Activated T-helper 1 cell treated with anti-CD3 and anti-CD28 coated beads, Interleukin-12 subunit alpha, Interleukin-12 subunit beta, Interleukin-2, Interleukin-4 antibody, amounts not matched to agents 30 ng/mL and 10 ng/mL and 1 ng/mL, durations not matched to agents 14 hours and 24 hours and 36 hours (primary cell): ENCODE measurements at regions of chr3 and their contacts with region 1.

Region 1: DNA sequence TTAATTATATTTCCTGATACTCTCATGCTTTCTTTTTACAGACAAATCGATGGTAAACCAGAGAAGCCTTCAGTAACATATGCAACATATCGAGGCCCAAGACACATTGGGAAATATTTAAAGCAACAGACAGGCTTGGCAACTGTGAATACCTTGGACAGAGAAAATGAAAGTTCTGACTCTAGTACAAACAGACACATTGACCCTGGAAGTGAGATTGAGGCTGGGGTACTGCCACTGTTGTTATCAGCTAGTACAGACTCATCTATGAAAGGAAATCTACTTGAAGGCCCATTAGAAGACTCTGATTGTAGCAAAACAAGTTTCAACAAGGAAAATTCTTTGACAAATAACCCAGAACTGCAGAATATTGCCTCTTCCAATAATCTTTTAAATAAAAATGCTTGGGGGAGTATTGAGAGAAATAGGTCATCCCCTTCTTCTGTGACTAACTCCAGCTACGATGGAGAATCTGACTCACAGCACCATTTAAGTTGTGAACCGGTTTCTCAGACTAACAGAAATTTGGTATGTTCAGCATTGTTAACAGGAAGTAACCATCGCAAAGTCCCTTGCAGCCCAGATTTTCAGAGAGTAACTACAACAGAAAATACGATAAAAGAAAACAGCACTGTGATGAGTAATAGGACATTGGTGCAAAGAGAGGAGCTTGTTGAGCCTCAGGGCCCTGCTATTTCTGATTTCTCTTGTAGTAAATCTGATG is 50.2 kb downstream of the CRYBG3 start:
- DNase-seq: peak; percentile 32
- H3K4me3 Mint-ChIP-seq: peak overlapping the region; percentile 59
- H3K27ac Mint-ChIP-seq: peak overlapping the region; percentile 88
- H3K4me1 Mint-ChIP-seq: peaks cover 27% of the 10 kb centered on the region
- H3K27me3 Mint-ChIP-seq: peaks cover 2% of the 10 kb centered on the region

Region 2: GRCh38 chr3:97510795-97511194 is 361.2 kb before region 1 on chr3:
- intact Hi-C with region 1: no loop called
- DNase-seq: no peak
- H3K4me3 Mint-ChIP-seq: no peak overlapping the region
- H3K27ac Mint-ChIP-seq: no peak overlapping the region
- H3K4me1 Mint-ChIP-seq: no peaks in the 10 kb centered on the region
- H3K27me3 Mint-ChIP-seq: no peaks in the 10 kb centered on the region

Region 3: GRCh38 chr3:97815149-97815917 is 56.6 kb before region 1 on chr3:
- intact Hi-C with region 1: loop called (anchors 1 kb)
- DNase-seq: peak; percentile 43
- H3K4me3 Mint-ChIP-seq: no peak overlapping the region
- H3K27ac Mint-ChIP-seq: peak overlapping the region; percentile 63
- H3K4me1 Mint-ChIP-seq: peaks cover 21% of the 10 kb centered on the region
- H3K27me3 Mint-ChIP-seq: peaks cover 8% of the 10 kb centered on the region

Region 4: DNA sequence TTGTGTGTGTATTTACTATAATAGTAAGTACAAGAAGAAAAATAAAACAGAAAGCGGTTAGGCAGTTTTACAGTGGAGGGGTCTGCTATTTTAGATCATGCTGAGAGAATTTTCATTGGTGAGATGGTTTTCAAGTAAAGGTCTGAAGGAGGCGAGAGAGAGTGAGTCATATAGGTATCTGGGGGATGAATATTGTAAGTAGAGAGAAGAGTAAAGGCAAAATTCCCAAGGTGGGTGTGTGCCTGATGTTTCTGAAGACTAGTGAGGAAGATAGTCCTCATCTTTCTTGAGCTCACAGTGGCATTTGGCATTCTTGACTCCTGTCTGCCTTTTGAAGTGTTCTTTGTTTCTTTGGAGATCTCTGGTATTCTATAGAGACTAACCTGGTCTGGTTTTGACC is 11.6 kb before region 1 on chr3:
- intact Hi-C with region 1: loop called (anchors 1 kb)
- DNase-seq: no peak
- H3K4me3 Mint-ChIP-seq: no peak overlapping the region
- H3K27ac Mint-ChIP-seq: no peak overlapping the region
- H3K4me1 Mint-ChIP-seq: peaks cover 5% of the 10 kb centered on the region
- H3K27me3 Mint-ChIP-seq: no peaks in the 10 kb centered on the region

Region 5: GRCh38 chr3:97981886-97982285 is 109.9 kb after region 1 on chr3:
- intact Hi-C with region 1: loop called (anchors 1 kb)
- DNase-seq: peak; percentile 43
- H3K4me3 Mint-ChIP-seq: peak overlapping the region; percentile 9
- H3K27ac Mint-ChIP-seq: peak overlapping the region; percentile 89
- H3K4me1 Mint-ChIP-seq: peaks cover 49% of the 10 kb centered on the region
- H3K27me3 Mint-ChIP-seq: no peaks in the 10 kb centered on the region

Region 6: GRCh38 chr3:98556164-98557130 is 684.5 kb after region 1 on chr3:
- intact Hi-C with region 1: loop called (anchors 1 kb)
- DNase-seq: peak; percentile 81
- H3K4me3 Mint-ChIP-seq: peak overlapping the region; percentile 83
- H3K27ac Mint-ChIP-seq: peak overlapping the region; percentile 98
- H3K4me1 Mint-ChIP-seq: peaks cover 94% of the 10 kb centered on the region
- H3K27me3 Mint-ChIP-seq: no peaks in the 10 kb centered on the region